ENCODE measurements at regions of chr16 and their contacts with region 1.

Region 1: GRCh38 chr16:2429034-2429770 is at the start of gene CCNF:
- DNase-seq: peak; percentile 71
- ATAC-seq: peak; percentile 96
- H3K4me3 ChIP-seq: peak within 1 kb of the TSS; percentile 97
- H3K27ac ChIP-seq: peak within 1 kb of the TSS; percentile 82
- H3K4me1 ChIP-seq: peaks cover 6% of the 10 kb centered on the region
- H3K27me3 ChIP-seq: no peaks in the 10 kb centered on the region
- CTCF ChIP-seq: no peak
- EP300 ChIP-seq: no peak
- POLR2A ChIP-seq: peak; percentile 80
- RAD21 ChIP-seq: no peak
- polyA plus RNA-seq, gene CCNF: 4.0 to 4.7 TPM

Region 2: DNA sequence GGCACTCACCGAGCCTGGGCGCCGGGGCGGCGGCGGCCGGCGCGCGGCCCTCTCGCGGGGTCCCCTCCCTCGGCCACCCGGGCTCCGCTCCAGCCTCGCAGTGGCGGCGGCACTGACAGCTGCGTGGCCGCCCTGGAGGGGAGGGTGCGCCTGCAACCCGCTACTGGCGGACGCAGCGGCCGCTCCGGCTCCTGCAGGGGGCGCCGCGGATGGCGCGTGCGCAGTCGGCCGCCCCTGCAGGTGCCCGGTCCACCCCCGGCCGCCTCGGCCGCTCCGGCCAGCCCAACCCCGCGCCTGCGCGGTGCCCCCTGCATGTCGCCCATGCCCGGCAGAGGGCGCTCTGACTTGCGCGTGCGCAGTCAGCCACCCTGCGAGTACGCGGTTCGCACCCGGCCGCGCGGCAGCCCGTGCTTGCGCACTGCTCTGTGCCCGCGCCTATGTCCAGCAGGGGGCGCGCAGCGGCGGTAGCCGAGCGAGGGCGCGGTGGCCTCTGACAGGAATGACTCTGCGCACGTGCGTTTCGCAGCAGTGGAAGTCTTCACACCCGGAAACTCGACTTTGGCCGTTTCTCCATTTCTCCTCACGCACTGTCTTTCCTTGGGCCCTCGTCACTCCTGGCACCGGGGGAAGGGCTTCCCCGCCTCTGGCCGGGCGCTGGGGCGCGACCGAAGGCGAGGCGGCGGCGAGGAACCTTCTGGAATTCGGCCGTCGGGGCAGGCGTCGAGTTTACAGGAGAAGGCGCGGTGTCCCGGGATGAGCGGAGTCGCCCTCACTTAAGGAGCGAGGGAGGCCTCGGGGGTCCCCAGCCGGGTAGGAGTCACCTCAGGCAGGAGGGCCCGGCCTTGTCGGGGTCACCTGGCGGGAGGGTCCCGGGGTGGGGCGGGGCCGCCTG is 88.4 kb before region 1 on chr16 and contains the start of gene ABCA3:
- CTCF ChIA-PET with region 1: interaction called, 6 read pairs
- POLR2A ChIA-PET with region 1: interaction called, 4 read pairs
- RAD21 ChIA-PET with region 1: no interaction called
- SMC1A ChIA-PET with region 1: no interaction called
- in situ Hi-C with region 1: no loop called
- intact Hi-C with region 1: loop called (anchors 1 kb)
- DNase-seq: peak; percentile 79
- ATAC-seq: peak; percentile 94
- H3K4me3 ChIP-seq: peak within 1 kb of the TSS; percentile 94
- H3K27ac ChIP-seq: peak within 1 kb of the TSS; percentile 31
- H3K4me1 ChIP-seq: peaks cover 3% of the 10 kb centered on the region; the same call in 1 of the 2 replicates
- H3K27me3 ChIP-seq: no peaks in the 10 kb centered on the region
- CTCF ChIP-seq: peak; percentile 92 to 100 (median 94)
- EP300 ChIP-seq: 0 out of 4 replicates have a peak, but pooled peaks of 1 of the 2 experiments have one; percentile 21
- POLR2A ChIP-seq: peak; percentile 57; the same call in 1 of the 2 replicates
- RAD21 ChIP-seq: peak; percentile 62
- polyA plus RNA-seq, gene ABCA3: 0.71 to 1.3 TPM

Region 3: DNA sequence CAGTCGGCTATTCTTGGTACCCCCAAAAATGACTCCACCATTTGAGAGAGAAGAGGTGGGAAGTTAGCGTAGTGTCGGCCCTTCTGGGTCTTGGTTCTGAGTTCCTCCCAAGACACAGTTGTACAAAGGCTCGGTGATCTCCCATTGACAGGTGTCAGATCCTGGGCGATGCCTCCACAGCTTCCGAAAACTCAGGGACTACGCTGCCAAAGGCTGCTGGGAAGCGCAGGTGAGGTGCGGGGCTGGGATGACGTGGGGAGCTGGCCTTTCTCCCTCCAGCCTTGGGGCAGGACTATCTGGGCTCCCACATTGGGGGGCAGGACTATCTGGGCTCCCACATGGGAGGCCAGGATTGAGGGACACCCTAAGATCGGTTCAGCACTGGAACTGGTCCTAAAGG is 10.4 kb after region 1 on chr16:
- CTCF ChIA-PET with region 1: interaction called, 7 read pairs
- POLR2A ChIA-PET with region 1: interaction called, 3 read pairs
- RAD21 ChIA-PET with region 1: no interaction called
- SMC1A ChIA-PET with region 1: interaction called, 10 read pairs
- in situ Hi-C with region 1: no loop called
- intact Hi-C with region 1: no loop called
- DNase-seq: no peak
- ATAC-seq: no peak
- H3K4me3 ChIP-seq: no peak overlapping the region
- H3K27ac ChIP-seq: no peak overlapping the region
- H3K4me1 ChIP-seq: peaks cover 12% of the 10 kb centered on the region
- H3K27me3 ChIP-seq: no peaks in the 10 kb centered on the region
- CTCF ChIP-seq: no peak
- EP300 ChIP-seq: no peak
- POLR2A ChIP-seq: no peak
- RAD21 ChIP-seq: no peak

Region 4: DNA sequence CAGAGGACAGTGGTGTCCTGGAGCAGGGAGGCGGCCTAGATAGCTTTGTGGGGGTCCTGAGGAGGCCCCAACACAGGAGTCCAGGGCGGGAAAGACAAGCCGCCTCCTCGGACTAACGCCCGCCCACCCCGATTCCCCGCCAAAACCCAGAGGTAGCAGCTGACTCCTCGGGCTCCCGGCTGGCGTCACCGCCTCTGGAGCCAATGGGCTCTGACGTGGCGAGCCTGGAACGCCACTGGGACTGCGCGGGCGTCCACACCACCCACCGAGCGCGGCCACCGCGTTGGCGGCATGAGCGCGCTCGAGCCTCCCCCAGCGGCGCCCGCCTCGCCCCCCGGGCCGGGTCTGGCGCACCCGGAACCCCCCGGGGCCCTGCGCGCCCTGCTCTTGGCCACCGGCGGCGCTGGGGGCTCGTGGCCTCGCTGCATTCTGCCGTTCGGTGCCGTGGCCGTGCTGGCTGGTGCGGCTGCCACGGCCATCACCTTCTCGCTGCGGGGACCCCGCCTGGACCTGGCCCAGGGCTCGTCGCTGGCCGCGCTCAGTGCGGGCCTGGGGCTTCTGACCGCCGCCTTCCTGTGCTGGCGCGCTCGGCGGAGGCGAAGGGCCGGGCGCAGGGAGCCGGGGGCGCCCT is 38.4 kb after region 1 on chr16:
- CTCF ChIA-PET with region 1: interaction called, 20 read pairs
- POLR2A ChIA-PET with region 1: interaction called, 5 read pairs
- RAD21 ChIA-PET with region 1: interaction called, 8 read pairs
- SMC1A ChIA-PET with region 1: interaction called, 8 read pairs
- in situ Hi-C with region 1: no loop called
- intact Hi-C with region 1: no loop called
- DNase-seq: no peak
- ATAC-seq: peak; percentile 55
- H3K4me3 ChIP-seq: peak overlapping the region; percentile 72; the same call in 1 of the 2 replicates
- H3K27ac ChIP-seq: no peak overlapping the region
- H3K4me1 ChIP-seq: peaks cover 13% of the 10 kb centered on the region
- H3K27me3 ChIP-seq: peaks cover 0 to 2% of the 10 kb centered on the region in 2 experiments; a peak in 1 of 4 replicates
- CTCF ChIP-seq: peak in 1 of 3 experiments; percentile 13; a peak in 1 of 6 replicates
- EP300 ChIP-seq: no peak; a peak in 1 of 4 replicates
- POLR2A ChIP-seq: peak; percentile 68
- RAD21 ChIP-seq: no peak

Region 5: DNA sequence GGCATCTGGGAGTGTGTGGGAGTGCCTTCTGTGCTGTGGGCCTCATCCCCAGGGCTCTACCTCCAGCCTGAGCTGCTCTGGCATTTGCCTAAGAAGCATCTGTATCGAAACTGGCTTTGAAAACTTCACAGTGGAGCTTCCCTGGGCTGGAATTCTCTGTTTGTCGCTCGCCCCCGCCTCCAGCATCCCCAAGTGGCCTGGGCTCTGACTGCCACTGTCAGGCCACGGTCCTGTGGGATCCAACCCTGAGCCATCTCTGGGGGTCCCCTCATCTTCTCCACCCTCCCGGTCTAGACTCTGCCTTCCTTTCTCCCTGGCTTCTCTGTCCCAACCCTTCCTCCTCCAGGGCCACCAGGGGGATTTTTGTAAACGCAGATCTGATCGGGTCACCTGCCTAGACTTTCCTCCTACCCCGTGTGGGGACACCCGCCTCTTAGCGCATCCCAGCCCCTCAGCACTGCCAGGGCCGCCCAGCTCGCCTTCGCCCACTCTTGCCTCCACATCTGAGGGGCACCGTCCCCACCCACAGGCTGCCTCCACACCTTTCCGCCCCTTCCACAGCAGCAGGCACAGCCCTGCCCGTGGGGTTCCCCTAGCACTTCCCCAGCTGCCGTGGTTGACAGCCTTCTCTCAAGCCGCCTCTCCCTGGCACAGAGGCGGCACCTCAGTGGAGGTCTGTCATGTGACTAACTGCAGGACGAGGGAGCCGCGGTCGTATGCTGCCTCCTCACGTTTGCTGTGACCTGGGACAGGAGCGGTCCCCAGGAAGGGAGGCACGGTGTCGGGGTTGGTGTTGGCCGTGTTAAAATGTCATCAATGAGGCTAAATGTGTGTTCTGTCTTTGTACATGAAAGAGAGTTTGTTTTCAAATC is 57.7 kb after region 1 on chr16:
- CTCF ChIA-PET with region 1: interaction called, 39 read pairs
- POLR2A ChIA-PET with region 1: interaction called, 10 read pairs
- RAD21 ChIA-PET with region 1: interaction called, 21 read pairs
- SMC1A ChIA-PET with region 1: interaction called, 9 read pairs
- in situ Hi-C with region 1: no loop called
- intact Hi-C with region 1: no loop called
- DNase-seq: peak; percentile 51
- ATAC-seq: peak; percentile 98
- H3K4me3 ChIP-seq: no peak overlapping the region
- H3K27ac ChIP-seq: no peak overlapping the region
- H3K4me1 ChIP-seq: peaks cover 16% of the 10 kb centered on the region
- H3K27me3 ChIP-seq: no peaks in the 10 kb centered on the region
- CTCF ChIP-seq: peak; percentile 49 to 95 (median 67); a peak in 5 of 6 replicates
- EP300 ChIP-seq: no peak; a peak in 1 of 4 replicates
- POLR2A ChIP-seq: peak; percentile 24; the same call in 1 of the 2 replicates
- RAD21 ChIP-seq: peak; percentile 61

Region 6: DNA sequence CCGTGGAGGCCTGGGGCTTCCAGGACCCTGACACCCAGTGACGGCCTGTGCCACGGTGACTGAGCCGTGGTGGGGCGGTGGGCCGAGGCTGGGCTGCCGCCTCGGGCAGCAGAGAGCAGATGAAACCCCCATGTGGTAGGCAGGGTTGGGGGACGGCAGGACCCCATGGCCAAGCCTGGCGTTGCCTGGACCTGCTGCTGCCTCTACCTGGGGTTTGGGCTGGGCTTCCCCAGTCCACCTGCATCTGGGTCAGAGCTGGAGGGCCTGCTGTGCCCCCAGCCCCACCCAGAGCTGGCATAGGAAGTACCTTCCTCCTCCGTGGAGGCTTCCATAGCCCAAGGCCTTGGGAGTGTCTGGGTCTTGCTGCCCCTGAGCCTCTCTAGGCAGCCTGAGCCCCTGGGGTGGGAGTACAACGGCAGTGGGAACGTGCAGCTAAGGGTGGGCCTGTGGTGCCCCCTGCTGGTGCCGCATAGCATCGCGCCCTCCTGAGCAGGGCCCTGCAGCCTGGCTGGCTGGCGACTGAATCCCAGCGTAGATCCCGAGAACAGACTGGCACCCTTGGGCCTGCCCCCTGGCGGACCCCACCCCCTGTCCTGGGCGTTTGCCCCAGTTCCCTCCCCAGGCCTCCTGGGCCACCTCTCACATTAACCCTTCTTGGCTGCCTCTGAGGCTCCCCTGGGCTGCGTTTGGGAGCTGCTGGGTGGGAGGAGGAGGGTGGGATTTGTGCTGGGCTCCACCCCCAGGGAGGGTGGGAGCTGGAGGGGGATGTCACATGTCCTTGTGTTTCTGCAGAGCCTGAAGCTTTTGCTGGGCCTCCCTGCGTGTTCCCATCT is 71.9 kb after region 1 on chr16:
- CTCF ChIA-PET with region 1: interaction called, 36 read pairs
- POLR2A ChIA-PET with region 1: interaction called, 7 read pairs
- RAD21 ChIA-PET with region 1: interaction called, 16 read pairs
- SMC1A ChIA-PET with region 1: interaction called, 17 read pairs
- in situ Hi-C with region 1: loop called (anchors 5 kb)
- intact Hi-C with region 1: loop called (anchors 2 kb)
- DNase-seq: peak; percentile 23
- ATAC-seq: peak; percentile 99
- H3K4me3 ChIP-seq: no peak overlapping the region
- H3K27ac ChIP-seq: no peak overlapping the region
- H3K4me1 ChIP-seq: no peaks in the 10 kb centered on the region
- H3K27me3 ChIP-seq: no peaks in the 10 kb centered on the region
- CTCF ChIP-seq: peak; percentile 95 to 99 (median 99); a peak in 5 of 6 replicates
- EP300 ChIP-seq: no peak
- POLR2A ChIP-seq: no peak
- RAD21 ChIP-seq: peak; percentile 93

Region 7: DNA sequence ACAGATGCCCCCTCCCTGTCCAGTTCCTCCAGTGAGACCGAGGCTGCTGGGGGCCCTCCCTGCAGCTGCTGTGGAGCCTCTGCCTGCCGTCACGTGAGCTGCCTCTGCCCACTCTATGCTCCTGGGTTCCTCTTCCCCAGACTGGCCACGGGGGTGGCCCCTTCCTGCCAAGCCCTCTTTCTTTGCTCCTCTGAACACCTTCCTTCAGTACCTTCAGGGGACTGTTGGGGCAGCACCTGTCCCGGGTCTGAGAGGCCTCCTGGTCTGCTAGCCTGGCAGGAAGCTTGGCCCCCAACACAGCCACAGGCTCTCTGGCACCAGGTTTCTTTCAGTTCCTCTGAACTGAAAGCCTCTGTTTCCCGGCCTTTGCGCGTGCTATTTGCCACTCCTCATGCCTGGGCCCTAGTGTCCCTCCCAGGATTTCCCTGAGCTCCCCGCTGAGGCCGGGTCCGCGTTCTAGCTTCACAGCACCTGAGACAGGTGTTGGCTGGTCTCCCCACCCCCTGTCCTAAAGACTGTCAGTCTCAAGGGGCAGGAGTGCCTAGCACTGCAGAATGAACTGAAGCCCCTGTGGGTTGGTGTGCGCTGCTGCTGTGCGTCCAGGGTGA is 78.0 kb after region 1 on chr16:
- CTCF ChIA-PET with region 1: interaction called, 7 read pairs
- POLR2A ChIA-PET with region 1: interaction called, 7 read pairs
- RAD21 ChIA-PET with region 1: interaction called, 3 read pairs
- SMC1A ChIA-PET with region 1: interaction called, 17 read pairs
- in situ Hi-C with region 1: loop called (anchors 5 kb)
- intact Hi-C with region 1: no loop called
- DNase-seq: peak; percentile 41
- ATAC-seq: peak; percentile 90
- H3K4me3 ChIP-seq: no peak overlapping the region
- H3K27ac ChIP-seq: peak overlapping the region; percentile 83
- H3K4me1 ChIP-seq: peaks cover 33% of the 10 kb centered on the region
- H3K27me3 ChIP-seq: no peaks in the 10 kb centered on the region
- CTCF ChIP-seq: peak; percentile 26 to 44 (median 39); a peak in 4 of 6 replicates
- EP300 ChIP-seq: no peak; a peak in 1 of 4 replicates
- POLR2A ChIP-seq: peak; percentile 34; the same call in 1 of the 2 replicates
- RAD21 ChIP-seq: 0 out of 2 replicates have a peak, but pooled peaks have one; percentile 6

Region 8: DNA sequence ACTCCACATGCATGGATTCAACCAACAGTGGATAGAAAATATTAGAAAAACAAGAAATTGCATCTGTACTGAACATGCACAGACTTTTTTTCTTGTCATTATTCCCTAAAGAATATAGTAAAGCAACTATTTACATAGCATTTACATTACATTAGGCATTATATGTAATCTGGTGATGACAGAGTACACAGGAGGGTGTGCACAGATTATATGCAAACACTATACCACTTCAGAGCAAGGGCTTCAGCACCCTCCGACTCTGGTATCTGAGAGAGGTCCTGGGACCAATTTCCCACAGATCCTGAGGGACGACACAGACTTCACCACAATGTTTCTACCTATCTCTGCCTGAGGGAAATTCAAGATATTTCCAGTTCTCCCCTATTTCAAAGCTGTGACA is 227.8 kb after region 1 on chr16:
- CTCF ChIA-PET with region 1: no interaction called
- POLR2A ChIA-PET with region 1: no interaction called
- RAD21 ChIA-PET with region 1: no interaction called
- SMC1A ChIA-PET with region 1: no interaction called
- in situ Hi-C with region 1: no loop called
- intact Hi-C with region 1: no loop called
- DNase-seq: no peak
- ATAC-seq: no peak
- H3K4me3 ChIP-seq: no peak overlapping the region
- H3K27ac ChIP-seq: no peak overlapping the region
- H3K4me1 ChIP-seq: no peaks in the 10 kb centered on the region
- H3K27me3 ChIP-seq: no peaks in the 10 kb centered on the region
- CTCF ChIP-seq: no peak
- EP300 ChIP-seq: no peak
- POLR2A ChIP-seq: no peak
- RAD21 ChIP-seq: no peak

Measured in GM12878 (cell line).